H1 (cell line): ENCODE measurements at regions of chr17 and their contacts with region 1.

Region 1: DNA sequence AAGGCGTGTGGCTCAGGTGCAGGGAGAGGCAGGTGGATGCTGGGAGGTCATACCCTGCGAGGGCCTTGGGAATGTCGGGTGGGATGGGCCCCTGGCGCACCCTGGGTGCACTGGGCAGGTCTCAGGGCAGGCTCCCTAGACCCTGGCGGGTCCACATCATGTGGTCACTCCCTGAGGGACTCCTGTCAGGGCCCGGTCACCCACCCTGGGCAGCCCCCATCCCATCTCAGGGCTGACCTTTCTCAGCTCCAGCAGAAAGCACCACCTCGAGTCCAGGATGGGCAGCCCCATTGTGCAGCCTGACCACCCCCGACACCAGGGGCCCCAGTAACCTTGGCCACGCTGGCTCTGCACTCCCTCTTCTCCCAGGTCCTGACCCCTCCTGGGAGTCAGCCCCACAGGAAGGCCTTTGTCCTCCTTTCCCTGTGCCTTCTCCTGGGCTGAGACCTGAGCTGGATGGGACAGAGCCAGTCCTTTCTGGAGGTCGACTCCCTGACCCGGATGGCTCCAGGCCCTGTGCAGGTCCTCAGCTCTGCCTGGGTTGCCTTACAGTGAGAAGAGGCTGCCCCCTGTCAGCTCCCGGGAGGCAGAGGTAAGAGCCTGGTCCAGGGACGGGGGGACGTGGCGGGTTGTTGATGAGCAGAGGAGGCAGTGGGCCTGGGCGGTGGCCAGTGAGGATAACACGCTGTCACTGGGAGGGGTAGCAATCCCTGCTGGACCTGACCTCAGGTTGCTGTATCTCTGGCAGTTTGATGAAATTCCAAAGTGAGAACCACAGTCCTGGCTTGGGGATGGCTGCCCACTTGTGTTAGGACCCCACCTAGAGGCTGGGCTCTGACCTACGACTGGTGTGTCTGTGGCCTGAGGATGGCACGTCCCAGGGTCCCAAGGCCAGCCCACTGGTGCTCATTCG is 77.9 kb downstream of the GOSR1 start:
- DNase-seq: peak; percentile 17 to 75
- H3K4me3 ChIP-seq: no peak overlapping the region
- H3K27ac ChIP-seq: no peak overlapping the region
- H3K4me1 ChIP-seq: no peaks in the 10 kb centered on the region
- H3K27me3 ChIP-seq: no peaks in the 10 kb centered on the region
- CTCF ChIP-seq: peak; percentile 56 to 72 (median 57)
- EP300 ChIP-seq: no peak
- POLR2A ChIP-seq: no peak
- RAD21 ChIP-seq: peak; percentile 69 to 73

Region 2: DNA sequence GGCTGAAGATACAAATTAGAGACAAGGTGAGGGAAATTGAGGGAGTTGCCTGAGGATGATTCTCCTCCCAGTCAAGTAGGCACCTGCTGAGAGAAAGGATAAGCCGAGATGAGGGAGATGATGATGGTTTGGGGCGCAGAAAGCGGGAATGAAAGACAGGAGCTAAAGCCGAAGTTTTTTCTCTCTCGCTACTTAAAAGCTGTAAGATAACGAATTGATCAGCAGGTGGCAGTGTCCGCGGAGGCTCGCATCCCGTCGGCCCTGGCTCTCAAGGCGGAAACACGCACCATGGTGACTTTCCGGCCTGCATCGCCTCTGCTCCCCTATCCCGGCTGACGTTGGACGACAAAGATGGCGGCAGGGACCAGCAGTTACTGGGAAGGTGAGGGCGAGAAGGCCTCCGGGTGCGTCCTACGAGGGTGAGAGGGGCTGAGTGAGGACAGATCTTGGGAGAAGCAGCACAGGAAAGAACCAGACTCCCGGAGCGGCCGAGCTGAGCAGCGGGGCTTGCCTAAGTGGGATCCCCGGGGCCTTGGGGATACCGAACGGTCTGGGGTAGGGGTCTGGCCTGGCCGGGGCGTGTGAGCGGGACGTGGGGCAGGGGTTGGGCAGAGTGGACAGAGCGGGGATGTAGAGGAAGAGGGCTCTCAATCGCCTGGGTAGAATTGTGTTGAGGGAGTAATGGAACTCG is 77.9 kb before region 1 on chr17 and contains the start of gene GOSR1:
- CTCF ChIA-PET with region 1: interaction called, 15 read pairs
- POLR2A ChIA-PET with region 1: no interaction called
- DNase-seq: peak; percentile 86 to 92
- H3K4me3 ChIP-seq: peak within 1 kb of the TSS; percentile 66 to 90 (median 86)
- H3K27ac ChIP-seq: peak within 1 kb of the TSS; percentile 92
- H3K4me1 ChIP-seq: peaks cover 0 to 3% (median 0%) of the 10 kb centered on the region in 4 experiments; a peak in 1 of 7 replicates
- H3K27me3 ChIP-seq: no peaks in the 10 kb centered on the region; a peak in 1 of 7 replicates
- CTCF ChIP-seq: peak; percentile 61 to 84 (median 74)
- EP300 ChIP-seq: no peak
- POLR2A ChIP-seq: peak; percentile 91 to 97
- RAD21 ChIP-seq: peak; percentile 65 to 67
- total RNA-seq, gene GOSR1: 38.0 and 43.3 TPM in 2 replicates

Region 3: DNA sequence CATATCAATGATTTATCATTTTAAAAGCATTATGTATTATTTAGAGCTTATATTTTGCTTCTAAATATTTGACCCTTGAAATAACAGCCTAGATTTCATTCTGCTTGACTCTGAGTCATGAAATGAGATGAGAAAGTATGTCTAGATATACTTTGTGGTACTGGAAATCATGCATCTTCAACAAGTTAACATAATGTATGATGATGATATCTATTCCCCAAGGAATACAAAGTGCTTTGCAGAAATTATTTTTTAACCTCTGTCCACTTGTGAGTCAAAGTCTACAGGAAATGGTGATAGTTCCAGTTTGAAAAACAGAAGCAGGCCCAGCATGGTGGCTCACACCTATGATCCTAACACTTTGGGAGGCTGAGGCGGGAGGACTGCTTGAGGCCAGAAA is 41.7 kb before region 1 on chr17:
- CTCF ChIA-PET with region 1: interaction called, 13 read pairs
- POLR2A ChIA-PET with region 1: no interaction called
- DNase-seq: no peak
- H3K4me3 ChIP-seq: no peak overlapping the region
- H3K27ac ChIP-seq: no peak overlapping the region
- H3K4me1 ChIP-seq: no peaks in the 10 kb centered on the region
- H3K27me3 ChIP-seq: no peaks in the 10 kb centered on the region
- CTCF ChIP-seq: no peak
- EP300 ChIP-seq: no peak
- POLR2A ChIP-seq: no peak
- RAD21 ChIP-seq: no peak

Region 4: DNA sequence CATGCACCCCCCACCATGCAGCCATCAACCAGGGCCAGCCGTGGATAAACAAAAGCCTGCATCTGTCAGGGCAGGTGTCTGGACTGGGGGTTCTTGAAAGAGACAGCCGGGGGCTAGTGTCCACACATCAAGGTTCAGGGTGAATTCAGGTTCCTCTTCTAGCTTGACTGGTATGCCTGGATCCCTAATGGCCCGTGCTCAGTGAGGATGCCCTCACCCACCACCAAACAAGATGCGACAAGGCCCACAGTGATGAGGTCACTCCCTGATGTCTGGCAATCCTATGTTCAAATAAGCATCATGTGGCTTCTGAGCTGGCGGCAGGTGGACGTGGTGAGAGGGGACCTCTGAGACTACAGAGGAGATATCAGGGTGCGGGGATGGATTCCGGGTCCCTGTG is 13.3 kb before region 1 on chr17:
- CTCF ChIA-PET with region 1: interaction called, 10 read pairs
- POLR2A ChIA-PET with region 1: no interaction called
- DNase-seq: peak in 1 of 2 experiments; percentile 38
- H3K4me3 ChIP-seq: no peak overlapping the region
- H3K27ac ChIP-seq: no peak overlapping the region
- H3K4me1 ChIP-seq: no peaks in the 10 kb centered on the region
- H3K27me3 ChIP-seq: no peaks in the 10 kb centered on the region; a peak in 1 of 7 replicates
- CTCF ChIP-seq: no peak
- EP300 ChIP-seq: no peak
- POLR2A ChIP-seq: no peak
- RAD21 ChIP-seq: no peak